Naive thymus-derived CD4-positive, alpha-beta T cell (primary cell): ENCODE measurements at regions of chr10 and their contacts with region 1.

Region 1: GRCh38 chr10:124418726-124419501 is at the start of gene OAT:
- DNase-seq: peak; percentile 90 to 96 (median 94)
- ATAC-seq: peak; percentile 99
- H3K4me3 ChIP-seq: peak within 1 kb of the TSS; percentile 76
- H3K4me3 Mint-ChIP-seq: peak within 1 kb of the TSS; percentile 80 to 91 (median 84)
- H3K27ac ChIP-seq: peak within 1 kb of the TSS; percentile 80
- H3K27ac Mint-ChIP-seq: peak within 1 kb of the TSS in 8 of 9 donors; percentile 31 to 90 (median 83)
- H3K4me1 ChIP-seq: peaks cover 8 to 10% of the 10 kb centered on the region in 2 donors
- H3K4me1 Mint-ChIP-seq: peaks cover 8 to 41% (median 31%) of the 10 kb centered on the region in 7 donors
- H3K27me3 ChIP-seq: no peaks in the 10 kb centered on the region
- H3K27me3 Mint-ChIP-seq: peaks cover 0 to 18% (median 2%) of the 10 kb centered on the region in 5 donors
- total RNA-seq, gene OAT: 29.6 to 47.0 (median 39.1) TPM

Region 2: GRCh38 chr10:123994417-123995081 is 424.4 kb before region 1 on chr10:
- CTCF ChIA-PET with region 1: interaction called, 3 read pairs
- POLR2A ChIA-PET with region 1: no interaction called
- intact Hi-C with region 1: loop called in 1 of 2 experiments (anchors 1 kb)
- DNase-seq: peak; percentile 58 to 88 (median 76)
- ATAC-seq: peak; percentile 76
- H3K4me3 ChIP-seq: peak overlapping the region; percentile 32
- H3K4me3 Mint-ChIP-seq: peak overlapping the region; percentile 52 to 82 (median 62)
- H3K27ac ChIP-seq: no peak overlapping the region
- H3K27ac Mint-ChIP-seq: no peak overlapping the region
- H3K4me1 ChIP-seq: peaks cover 9% of the 10 kb centered on the region in 2 donors
- H3K4me1 Mint-ChIP-seq: peaks cover 7 to 20% (median 13%) of the 10 kb centered on the region in 7 donors
- H3K27me3 ChIP-seq: peaks cover 0 to 17% of the 10 kb centered on the region in 2 donors
- H3K27me3 Mint-ChIP-seq: peaks cover 48 to 73% (median 58%) of the 10 kb centered on the region in 5 donors

Region 3: GRCh38 chr10:124461438-124462347 is 42.8 kb after region 1 on chr10 and contains the start of gene LHPP:
- CTCF ChIA-PET with region 1: no interaction called
- POLR2A ChIA-PET with region 1: interaction called, 4 read pairs
- intact Hi-C with region 1: loop called (anchors 1 kb)
- DNase-seq: peak; percentile 77 to 91 (median 87)
- ATAC-seq: peak; percentile 98
- H3K4me3 ChIP-seq: peak within 1 kb of the TSS; percentile 76
- H3K4me3 Mint-ChIP-seq: peak within 1 kb of the TSS; percentile 69 to 96 (median 90)
- H3K27ac ChIP-seq: peak within 1 kb of the TSS; percentile 76
- H3K27ac Mint-ChIP-seq: peak within 1 kb of the TSS; percentile 82 to 98 (median 96)
- H3K4me1 ChIP-seq: peaks cover 13 to 21% of the 10 kb centered on the region in 2 donors
- H3K4me1 Mint-ChIP-seq: peaks cover 23 to 35% (median 28%) of the 10 kb centered on the region in 7 donors
- H3K27me3 ChIP-seq: no peaks in the 10 kb centered on the region
- H3K27me3 Mint-ChIP-seq: peaks cover 0 to 17% (median 11%) of the 10 kb centered on the region in 5 donors
- total RNA-seq, gene LHPP: 19.8 to 31.2 (median 27.6) TPM

Region 4: DNA sequence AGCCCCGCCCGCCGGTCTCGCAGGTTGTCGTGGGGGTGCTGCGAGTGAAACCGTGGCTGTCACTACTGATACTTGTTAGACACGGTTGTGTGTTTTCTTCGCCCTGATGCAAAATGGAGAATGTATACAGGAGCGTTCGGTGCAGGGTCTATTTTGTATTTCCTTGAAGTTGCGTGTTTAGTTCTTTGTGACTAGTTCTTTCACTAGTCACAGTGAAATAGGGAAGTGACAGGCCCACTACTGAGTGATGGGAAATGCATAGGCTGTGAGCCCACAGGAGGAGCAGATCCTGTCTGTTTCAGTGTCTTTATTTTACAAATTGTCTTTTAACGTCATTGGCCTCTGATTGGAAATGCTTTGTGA is 383.4 kb after region 1 on chr10:
- CTCF ChIA-PET with region 1: no interaction called
- POLR2A ChIA-PET with region 1: no interaction called
- intact Hi-C with region 1: loop called in 1 of 2 experiments (anchors 1 kb)
- DNase-seq: peak in 1 of 9 donors; percentile 16
- ATAC-seq: peak; percentile 28
- H3K4me3 ChIP-seq: peak overlapping the region; percentile 97
- H3K4me3 Mint-ChIP-seq: peak overlapping the region; percentile 85 to 96 (median 88)
- H3K27ac ChIP-seq: peak overlapping the region; percentile 90
- H3K27ac Mint-ChIP-seq: peak overlapping the region; percentile 55 to 95 (median 88)
- H3K4me1 ChIP-seq: peaks cover 0 to 5% of the 10 kb centered on the region in 2 donors
- H3K4me1 Mint-ChIP-seq: peaks cover 9 to 24% (median 17%) of the 10 kb centered on the region in 7 donors
- H3K27me3 ChIP-seq: no peaks in the 10 kb centered on the region
- H3K27me3 Mint-ChIP-seq: peaks cover 0 to 12% (median 4%) of the 10 kb centered on the region in 5 donors

Region 5: GRCh38 chr10:125822878-125823662 is 1404.2 kb after region 1 on chr10 and contains the starts of genes BCCIP and UROS:
- CTCF ChIA-PET with region 1: no interaction called
- POLR2A ChIA-PET with region 1: no interaction called
- intact Hi-C with region 1: loop called in 1 of 2 experiments (anchors 2 kb)
- DNase-seq: peak; percentile 88 to 98 (median 94)
- ATAC-seq: peak; percentile 92
- H3K4me3 ChIP-seq: peak within 1 kb of the TSS; percentile 97
- H3K4me3 Mint-ChIP-seq: peak within 1 kb of the TSS in 6 of 10 donors; percentile 85 to 89 (median 87)
- H3K27ac ChIP-seq: peak within 1 kb of the TSS; percentile 76
- H3K27ac Mint-ChIP-seq: peak within 1 kb of the TSS in 8 of 9 donors; percentile 16 to 88 (median 80)
- H3K4me1 ChIP-seq: peaks cover 11 to 21% of the 10 kb centered on the region in 2 donors
- H3K4me1 Mint-ChIP-seq: peaks cover 3 to 33% (median 22%) of the 10 kb centered on the region in 7 donors
- H3K27me3 ChIP-seq: no peaks in the 10 kb centered on the region
- H3K27me3 Mint-ChIP-seq: no peaks in the 10 kb centered on the region
- total RNA-seq, gene BCCIP: 31.3 to 68.4 (median 45.8) TPM
- total RNA-seq, gene UROS: 28.9 to 53.0 (median 41.3) TPM